Activated CD4-positive, alpha-beta memory T cell treated with anti-CD3 and anti-CD28 coated beads for 36 hours (primary cell): ENCODE measurements at regions of chr16 and their contacts with region 1.

Region 1: GRCh38 chr16:24721830-24722238 is 7.6 kb upstream of the TNRC6A start:
- DNase-seq: peak; percentile 86
- H3K4me3 Mint-ChIP-seq: peak overlapping the region; percentile 14
- H3K27ac Mint-ChIP-seq: peak overlapping the region; percentile 48
- H3K4me1 Mint-ChIP-seq: peaks cover 38% of the 10 kb centered on the region
- H3K27me3 Mint-ChIP-seq: peaks cover 6% of the 10 kb centered on the region

Region 2: DNA sequence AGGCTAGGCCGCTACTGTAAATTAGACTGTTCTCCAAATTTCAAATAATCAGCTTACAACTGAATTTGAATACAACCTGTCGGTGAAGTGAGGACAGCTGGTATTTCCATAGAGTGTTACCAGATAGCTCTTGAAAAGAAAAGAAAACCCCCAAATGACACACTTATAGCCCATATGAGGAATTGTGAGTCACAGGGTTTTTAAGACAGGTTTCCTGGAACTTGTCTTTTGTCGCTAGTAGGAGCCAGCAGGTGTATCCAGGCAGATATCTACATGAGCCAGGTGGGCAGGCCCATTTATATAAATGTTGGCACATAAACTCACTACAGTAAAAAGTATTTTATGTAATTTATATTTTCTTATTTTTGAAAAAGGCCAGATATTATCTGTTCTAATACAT is 31.6 kb after region 1 on chr16:
- CTCF ChIA-PET with region 1: no interaction called
- POLR2A ChIA-PET with region 1: no interaction called
- intact Hi-C with region 1: loop called (anchors 1 kb)
- DNase-seq: peak; percentile 42
- H3K4me3 Mint-ChIP-seq: no peak overlapping the region
- H3K27ac Mint-ChIP-seq: peak overlapping the region; percentile 86
- H3K4me1 Mint-ChIP-seq: peaks cover 62% of the 10 kb centered on the region
- H3K27me3 Mint-ChIP-seq: no peaks in the 10 kb centered on the region

Region 3: GRCh38 chr16:24850289-24850938 is 128.6 kb after region 1 on chr16:
- CTCF ChIA-PET with region 1: no interaction called
- POLR2A ChIA-PET with region 1: no interaction called
- intact Hi-C with region 1: loop called (anchors 2 kb)
- DNase-seq: peak; percentile 53
- H3K4me3 Mint-ChIP-seq: no peak overlapping the region
- H3K27ac Mint-ChIP-seq: no peak overlapping the region
- H3K4me1 Mint-ChIP-seq: peaks cover 21% of the 10 kb centered on the region
- H3K27me3 Mint-ChIP-seq: no peaks in the 10 kb centered on the region